Panc1 (cell line): ENCODE measurements at regions of chr11 and their contacts with region 1.

Region 1: GRCh38 chr11:121696177-121696871 is 243.6 kb upstream of the SORL1-AS1 start:
- DNase-seq: no peak
- ATAC-seq: 0 out of 2 replicates have a peak, but pooled peaks have one; percentile 12
- H3K4me3 ChIP-seq: no peak overlapping the region
- H3K27ac ChIP-seq: no peak overlapping the region
- H3K4me1 ChIP-seq: no peaks in the 10 kb centered on the region
- H3K27me3 ChIP-seq: peaks cover 7% of the 10 kb centered on the region; the same call in 1 of the 2 replicates
- CTCF ChIP-seq: no peak

Region 2: DNA sequence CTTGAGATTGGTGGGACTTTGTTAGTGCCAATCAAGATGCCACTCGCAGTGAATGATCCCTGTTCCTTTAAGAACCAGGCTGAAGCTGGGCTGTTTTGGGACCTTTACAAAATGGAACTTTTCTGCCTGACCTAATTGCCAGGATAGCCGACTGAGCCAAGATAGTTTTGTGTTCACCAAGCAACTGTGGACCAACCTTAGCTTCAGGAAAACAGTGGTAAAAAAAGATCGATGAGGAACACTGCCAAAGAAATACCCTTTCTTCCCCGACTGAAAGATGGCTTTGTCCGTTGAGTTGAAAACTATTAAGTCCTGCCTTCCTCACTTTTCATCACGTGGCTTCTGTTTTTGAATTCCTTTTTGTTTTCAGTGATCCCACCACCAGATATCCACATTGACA is 85.6 kb before region 1 on chr11:
- CTCF ChIA-PET with region 1: no interaction called
- POLR2A ChIA-PET with region 1: no interaction called
- in situ Hi-C with region 1: no loop called
- intact Hi-C with region 1: no loop called
- DNase-seq: no peak
- ATAC-seq: no peak
- H3K4me3 ChIP-seq: no peak overlapping the region
- H3K27ac ChIP-seq: no peak overlapping the region
- H3K4me1 ChIP-seq: no peaks in the 10 kb centered on the region
- H3K27me3 ChIP-seq: no peaks in the 10 kb centered on the region
- CTCF ChIP-seq: no peak

Region 3: GRCh38 chr11:121671283-121672168 is 24.8 kb before region 1 on chr11:
- CTCF ChIA-PET with region 1: no interaction called
- POLR2A ChIA-PET with region 1: interaction called, 17 read pairs
- in situ Hi-C with region 1: no loop called
- intact Hi-C with region 1: no loop called
- DNase-seq: no peak
- ATAC-seq: 0 out of 2 replicates have a peak, but pooled peaks have one; percentile 29
- H3K4me3 ChIP-seq: no peak overlapping the region
- H3K27ac ChIP-seq: no peak overlapping the region
- H3K4me1 ChIP-seq: no peaks in the 10 kb centered on the region
- H3K27me3 ChIP-seq: no peaks in the 10 kb centered on the region
- CTCF ChIP-seq: no peak